Activated T-helper 1 cell treated with anti-CD3 and anti-CD28 coated beads, Interleukin-12 subunit alpha, Interleukin-12 subunit beta, Interleukin-2, Interleukin-4 antibody, amounts not matched to agents 30 ng/mL and 10 ng/mL and 1 ng/mL, durations not matched to agents 14 hours and 24 hours and 36 hours (primary cell): ENCODE measurements at regions of chr9 and their contacts with region 1.

Region 1: GRCh38 chr9:36728651-36729520 is 156.2 kb downstream of the MELK start:
- DNase-seq: peak; percentile 37
- H3K4me3 Mint-ChIP-seq: no peak overlapping the region
- H3K27ac Mint-ChIP-seq: no peak overlapping the region
- H3K4me1 Mint-ChIP-seq: no peaks in the 10 kb centered on the region
- H3K27me3 Mint-ChIP-seq: no peaks in the 10 kb centered on the region

Region 2: GRCh38 chr9:36499174-36499890 is 229.6 kb before region 1 on chr9:
- intact Hi-C with region 1: no loop called
- DNase-seq: no peak
- H3K4me3 Mint-ChIP-seq: no peak overlapping the region
- H3K27ac Mint-ChIP-seq: no peak overlapping the region
- H3K4me1 Mint-ChIP-seq: peaks cover 28% of the 10 kb centered on the region
- H3K27me3 Mint-ChIP-seq: no peaks in the 10 kb centered on the region

Region 3: GRCh38 chr9:36560857-36561221 is 168.0 kb before region 1 on chr9:
- intact Hi-C with region 1: loop called (anchors 2 kb)
- DNase-seq: no peak
- H3K4me3 Mint-ChIP-seq: no peak overlapping the region
- H3K27ac Mint-ChIP-seq: no peak overlapping the region
- H3K4me1 Mint-ChIP-seq: no peaks in the 10 kb centered on the region
- H3K27me3 Mint-ChIP-seq: no peaks in the 10 kb centered on the region

Region 4: DNA sequence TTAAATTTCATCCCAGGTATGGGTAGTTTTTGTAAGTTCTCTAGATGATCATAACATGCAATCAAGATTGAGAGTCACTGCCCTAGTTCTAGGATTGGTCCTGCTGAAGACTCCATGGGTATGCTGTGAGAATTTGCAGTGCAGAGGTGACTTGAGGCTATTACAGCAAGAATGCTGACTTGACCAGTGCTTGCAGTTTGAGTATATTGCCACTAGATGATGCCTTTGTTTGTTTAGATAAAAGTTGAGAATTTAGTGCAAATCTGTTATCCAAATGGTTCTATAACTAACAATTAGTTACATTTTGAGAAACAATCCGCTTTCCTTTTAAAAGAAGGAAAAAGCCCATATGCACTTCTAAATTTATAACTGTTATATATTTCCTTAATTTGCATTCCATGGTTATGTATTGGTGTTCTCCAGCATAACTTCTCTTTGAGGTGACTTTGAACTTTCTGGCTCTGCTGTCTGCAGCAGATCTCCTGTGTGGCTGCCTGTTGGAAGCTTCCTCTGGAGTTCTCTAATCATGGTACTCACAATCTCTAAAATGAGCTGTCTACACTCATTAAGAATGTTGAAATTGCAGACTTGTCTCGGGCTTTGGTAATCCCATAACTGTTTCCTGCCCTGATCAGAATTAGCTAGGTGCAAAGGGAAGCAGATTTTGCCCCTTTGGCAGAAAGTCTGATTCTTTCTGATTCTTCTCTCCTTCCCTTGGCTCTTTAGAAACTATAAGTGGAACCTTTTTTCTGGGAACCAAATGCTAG is 131.3 kb before region 1 on chr9:
- intact Hi-C with region 1: loop called (anchors 1 kb)
- DNase-seq: no peak
- H3K4me3 Mint-ChIP-seq: no peak overlapping the region
- H3K27ac Mint-ChIP-seq: no peak overlapping the region
- H3K4me1 Mint-ChIP-seq: peaks cover 25% of the 10 kb centered on the region
- H3K27me3 Mint-ChIP-seq: no peaks in the 10 kb centered on the region

Region 5: GRCh38 chr9:36632892-36633291 is 96.0 kb before region 1 on chr9:
- intact Hi-C with region 1: loop called (anchors 1 kb)
- DNase-seq: no peak
- H3K4me3 Mint-ChIP-seq: no peak overlapping the region
- H3K27ac Mint-ChIP-seq: no peak overlapping the region
- H3K4me1 Mint-ChIP-seq: no peaks in the 10 kb centered on the region
- H3K27me3 Mint-ChIP-seq: no peaks in the 10 kb centered on the region

Region 6: GRCh38 chr9:36659500-36659899 is 69.4 kb before region 1 on chr9:
- intact Hi-C with region 1: no loop called
- DNase-seq: no peak
- H3K4me3 Mint-ChIP-seq: no peak overlapping the region
- H3K27ac Mint-ChIP-seq: no peak overlapping the region
- H3K4me1 Mint-ChIP-seq: peaks cover 4% of the 10 kb centered on the region
- H3K27me3 Mint-ChIP-seq: no peaks in the 10 kb centered on the region